Naive thymus-derived CD4-positive, alpha-beta T cell (primary cell): ENCODE measurements at regions of chr19 and their contacts with region 1.

Region 1: DNA sequence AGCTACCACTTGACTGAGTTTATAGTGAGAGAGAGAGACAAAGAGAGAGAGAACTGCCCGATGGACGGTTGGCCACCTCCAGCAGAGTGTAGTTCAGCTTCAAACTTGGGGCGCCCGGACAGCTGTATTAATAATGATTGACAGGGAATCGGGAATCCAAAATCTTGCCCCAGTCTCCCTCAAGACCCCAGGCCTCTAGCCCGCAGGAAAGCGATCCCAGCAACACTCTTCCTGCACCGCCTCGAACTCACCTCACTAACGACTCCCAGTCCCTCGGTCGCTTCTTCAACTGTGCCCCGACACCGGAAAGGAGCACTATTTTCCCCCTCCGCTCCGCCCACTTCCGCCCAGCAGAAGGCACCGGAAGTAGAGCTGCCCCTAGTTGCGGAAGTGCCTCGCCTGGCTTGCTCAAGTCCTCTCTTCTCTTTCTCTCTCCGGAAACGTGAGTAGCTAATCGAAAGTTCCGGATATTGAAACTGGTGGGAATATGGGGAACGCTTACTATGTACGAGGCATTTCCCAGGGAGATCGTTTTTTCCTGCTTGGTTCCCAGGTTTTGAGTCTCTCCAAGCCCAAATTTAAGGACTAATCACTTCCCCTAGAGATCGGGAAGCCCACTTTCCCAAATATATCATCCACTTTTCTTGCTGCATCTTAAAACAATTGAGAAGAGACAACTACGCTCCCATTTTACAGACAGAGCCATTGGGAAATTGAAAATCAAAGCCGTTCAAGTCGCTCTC is at the start of gene NOSIP:
- DNase-seq: peak; percentile 88 to 96 (median 94)
- ATAC-seq: peak; percentile 100
- H3K4me3 ChIP-seq: peak within 1 kb of the TSS; percentile 68
- H3K4me3 Mint-ChIP-seq: peak within 1 kb of the TSS; percentile 91 to 98 (median 94)
- H3K27ac ChIP-seq: peak within 1 kb of the TSS; percentile 84
- H3K27ac Mint-ChIP-seq: peak within 1 kb of the TSS; percentile 85 to 98 (median 92)
- H3K4me1 ChIP-seq: peaks cover 0 to 22% of the 10 kb centered on the region in 2 donors
- H3K4me1 Mint-ChIP-seq: peaks cover 20 to 49% (median 36%) of the 10 kb centered on the region in 7 donors
- H3K27me3 ChIP-seq: no peaks in the 10 kb centered on the region
- H3K27me3 Mint-ChIP-seq: no peaks in the 10 kb centered on the region
- total RNA-seq, gene NOSIP: 222 to 267 (median 228) TPM

Region 2: GRCh38 chr19:49497047-49497788 is 83.2 kb before region 1 on chr19:
- CTCF ChIA-PET with region 1: interaction called, 314 read pairs
- POLR2A ChIA-PET with region 1: interaction called, 15 read pairs
- intact Hi-C with region 1: no loop called
- DNase-seq: peak; percentile 55 to 85 (median 77)
- ATAC-seq: peak; percentile 20
- H3K4me3 ChIP-seq: peak overlapping the region; percentile 97
- H3K4me3 Mint-ChIP-seq: peak overlapping the region; percentile 96 to 100 (median 99)
- H3K27ac ChIP-seq: peak overlapping the region; percentile 99
- H3K27ac Mint-ChIP-seq: peak overlapping the region; percentile 91 to 100 (median 98)
- H3K4me1 ChIP-seq: peaks cover 21 to 40% of the 10 kb centered on the region in 2 donors
- H3K4me1 Mint-ChIP-seq: peaks cover 32 to 64% (median 50%) of the 10 kb centered on the region in 7 donors
- H3K27me3 ChIP-seq: no peaks in the 10 kb centered on the region
- H3K27me3 Mint-ChIP-seq: peaks cover 0 to 12% (median 0%) of the 10 kb centered on the region in 5 donors

Region 3: GRCh38 chr19:49502866-49503581 is 77.4 kb before region 1 on chr19:
- CTCF ChIA-PET with region 1: interaction called, 314 read pairs
- POLR2A ChIA-PET with region 1: interaction called, 15 read pairs
- intact Hi-C with region 1: no loop called
- DNase-seq: peak in 5 of 9 donors; percentile 68 to 81 (median 77)
- ATAC-seq: no peak
- H3K4me3 ChIP-seq: no peak overlapping the region
- H3K4me3 Mint-ChIP-seq: peak overlapping the region in 6 of 10 donors; percentile 7 to 96 (median 48)
- H3K27ac ChIP-seq: peak overlapping the region; percentile 99
- H3K27ac Mint-ChIP-seq: peak overlapping the region; percentile 91 to 100 (median 98)
- H3K4me1 ChIP-seq: peaks cover 36% of the 10 kb centered on the region in 2 donors
- H3K4me1 Mint-ChIP-seq: peaks cover 24 to 55% (median 40%) of the 10 kb centered on the region in 7 donors
- H3K27me3 ChIP-seq: no peaks in the 10 kb centered on the region
- H3K27me3 Mint-ChIP-seq: peaks cover 0 to 9% (median 0%) of the 10 kb centered on the region in 5 donors

Region 4: GRCh38 chr19:49546825-49547565 is 33.4 kb before region 1 on chr19:
- CTCF ChIA-PET with region 1: interaction called, 231 read pairs
- POLR2A ChIA-PET with region 1: interaction called, 687 read pairs
- intact Hi-C with region 1: no loop called
- DNase-seq: peak in 8 of 9 donors; percentile 62 to 82 (median 78)
- ATAC-seq: peak; percentile 92
- H3K4me3 ChIP-seq: peak overlapping the region; percentile 30
- H3K4me3 Mint-ChIP-seq: peak overlapping the region; percentile 78 to 94 (median 84)
- H3K27ac ChIP-seq: peak overlapping the region; percentile 46
- H3K27ac Mint-ChIP-seq: peak overlapping the region; percentile 76 to 99 (median 91)
- H3K4me1 ChIP-seq: peaks cover 17 to 60% of the 10 kb centered on the region in 2 donors
- H3K4me1 Mint-ChIP-seq: peaks cover 29 to 81% (median 48%) of the 10 kb centered on the region in 7 donors
- H3K27me3 ChIP-seq: no peaks in the 10 kb centered on the region
- H3K27me3 Mint-ChIP-seq: peaks cover 0 to 3% (median 0%) of the 10 kb centered on the region in 5 donors

Region 5: DNA sequence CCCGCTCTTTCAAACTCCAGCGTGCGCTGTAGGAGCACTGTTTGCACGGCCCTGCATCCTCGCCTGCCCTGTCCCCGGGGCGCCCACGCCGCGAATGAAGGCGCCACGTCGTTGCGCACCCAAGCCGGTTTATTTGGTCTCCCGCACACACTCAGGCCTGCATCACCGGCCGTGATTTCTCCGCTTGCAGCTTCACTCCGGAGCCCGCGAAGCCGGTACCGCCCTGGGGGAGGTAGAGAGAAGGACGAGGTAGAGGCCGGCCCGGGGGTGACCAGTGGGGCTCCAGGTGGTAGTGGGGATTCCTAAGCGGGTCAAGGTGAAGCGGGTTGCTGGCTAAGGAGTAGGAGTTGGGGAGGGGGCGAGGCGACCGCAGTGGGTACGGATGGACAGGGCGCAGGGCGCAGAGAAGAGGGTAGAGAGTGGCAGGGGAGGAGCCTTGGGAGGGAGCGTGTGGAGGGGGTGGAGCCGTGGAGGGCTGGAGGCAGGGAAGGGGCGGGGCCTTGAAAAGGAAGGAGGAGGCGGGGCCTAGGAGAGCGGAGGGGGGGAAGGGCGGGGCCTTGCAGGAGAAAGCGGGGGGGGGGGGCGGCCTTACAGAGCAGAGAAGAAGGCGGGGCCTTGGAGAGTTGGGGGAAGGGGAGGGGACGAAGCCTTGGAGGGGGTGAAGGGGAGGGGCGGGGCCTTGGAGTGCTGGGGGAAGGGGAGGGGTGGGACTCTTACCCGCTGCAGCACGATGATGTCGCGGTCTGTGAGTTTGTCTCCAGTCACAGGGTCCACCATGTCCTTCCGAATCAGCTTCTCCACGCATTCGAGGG is 24.6 kb before region 1 on chr19:
- CTCF ChIA-PET with region 1: interaction called, 231 read pairs
- POLR2A ChIA-PET with region 1: interaction called, 687 read pairs
- intact Hi-C with region 1: no loop called
- DNase-seq: peak; percentile 59 to 94 (median 91)
- ATAC-seq: peak; percentile 89
- H3K4me3 ChIP-seq: peak overlapping the region; percentile 39
- H3K4me3 Mint-ChIP-seq: peak overlapping the region; percentile 62 to 90 (median 82)
- H3K27ac ChIP-seq: peak overlapping the region; percentile 88
- H3K27ac Mint-ChIP-seq: peak overlapping the region; percentile 93 to 100 (median 98)
- H3K4me1 ChIP-seq: peaks cover 53 to 71% of the 10 kb centered on the region in 2 donors
- H3K4me1 Mint-ChIP-seq: peaks cover 48 to 75% (median 68%) of the 10 kb centered on the region in 7 donors
- H3K27me3 ChIP-seq: no peaks in the 10 kb centered on the region
- H3K27me3 Mint-ChIP-seq: no peaks in the 10 kb centered on the region

Region 6: GRCh38 chr19:49614096-49614833 is 33.8 kb after region 1 on chr19:
- CTCF ChIA-PET with region 1: no interaction called
- POLR2A ChIA-PET with region 1: no interaction called
- intact Hi-C with region 1: no loop called
- DNase-seq: no peak
- ATAC-seq: peak; percentile 71
- H3K4me3 ChIP-seq: no peak overlapping the region
- H3K4me3 Mint-ChIP-seq: peak overlapping the region in 1 of 10 donors; percentile 32
- H3K27ac ChIP-seq: no peak overlapping the region
- H3K27ac Mint-ChIP-seq: peak overlapping the region in 7 of 9 donors; percentile 3 to 81 (median 64)
- H3K4me1 ChIP-seq: no peaks in the 10 kb centered on the region
- H3K4me1 Mint-ChIP-seq: peaks cover 3 to 23% (median 14%) of the 10 kb centered on the region in 7 donors
- H3K27me3 ChIP-seq: no peaks in the 10 kb centered on the region
- H3K27me3 Mint-ChIP-seq: no peaks in the 10 kb centered on the region

Region 7: GRCh38 chr19:49665351-49666119 is 85.1 kb after region 1 on chr19 and contains the starts of genes BCL2L12 and IRF3:
- CTCF ChIA-PET with region 1: interaction called, 3 read pairs
- POLR2A ChIA-PET with region 1: interaction called, 17 read pairs
- intact Hi-C with region 1: loop called in 1 of 2 experiments (anchors 2 kb)
- DNase-seq: peak; percentile 99
- ATAC-seq: peak; percentile 90
- H3K4me3 ChIP-seq: peak within 1 kb of the TSS; percentile 95
- H3K4me3 Mint-ChIP-seq: peak within 1 kb of the TSS; percentile 97 to 100 (median 99)
- H3K27ac ChIP-seq: peak within 1 kb of the TSS; percentile 80
- H3K27ac Mint-ChIP-seq: peak within 1 kb of the TSS; percentile 96 to 99 (median 97)
- H3K4me1 ChIP-seq: peaks cover 23% of the 10 kb centered on the region in 2 donors
- H3K4me1 Mint-ChIP-seq: peaks cover 24 to 47% (median 39%) of the 10 kb centered on the region in 7 donors
- H3K27me3 ChIP-seq: no peaks in the 10 kb centered on the region
- H3K27me3 Mint-ChIP-seq: peaks cover 0 to 2% (median 0%) of the 10 kb centered on the region in 5 donors
- total RNA-seq, gene BCL2L12: 11.3 to 57.2 (median 22.6) TPM
- total RNA-seq, gene IRF3: 176 to 346 (median 212) TPM

Region 8: GRCh38 chr19:49850473-49851342 is 270.3 kb after region 1 on chr19 and contains the start of gene PTOV1:
- CTCF ChIA-PET with region 1: no interaction called
- POLR2A ChIA-PET with region 1: no interaction called
- intact Hi-C with region 1: loop called (anchors 2 kb)
- DNase-seq: peak; percentile 78 to 97 (median 88)
- ATAC-seq: peak; percentile 93
- H3K4me3 ChIP-seq: peak within 1 kb of the TSS; percentile 89
- H3K4me3 Mint-ChIP-seq: peak within 1 kb of the TSS; percentile 91 to 96 (median 92)
- H3K27ac ChIP-seq: peak within 1 kb of the TSS; percentile 99
- H3K27ac Mint-ChIP-seq: peak within 1 kb of the TSS; percentile 85 to 98 (median 95)
- H3K4me1 ChIP-seq: peaks cover 7 to 25% of the 10 kb centered on the region in 2 donors
- H3K4me1 Mint-ChIP-seq: peaks cover 22 to 37% (median 33%) of the 10 kb centered on the region in 7 donors
- H3K27me3 ChIP-seq: no peaks in the 10 kb centered on the region
- H3K27me3 Mint-ChIP-seq: peaks cover 0 to 11% (median 0%) of the 10 kb centered on the region in 5 donors
- total RNA-seq, gene PTOV1: 92.8 to 170 (median 160) TPM